Activated B cell treated with CpG ODN at 0.5 μM for 24 hours (primary cell): ENCODE measurements at regions of chr2 and their contacts with region 1.

Region 1: DNA sequence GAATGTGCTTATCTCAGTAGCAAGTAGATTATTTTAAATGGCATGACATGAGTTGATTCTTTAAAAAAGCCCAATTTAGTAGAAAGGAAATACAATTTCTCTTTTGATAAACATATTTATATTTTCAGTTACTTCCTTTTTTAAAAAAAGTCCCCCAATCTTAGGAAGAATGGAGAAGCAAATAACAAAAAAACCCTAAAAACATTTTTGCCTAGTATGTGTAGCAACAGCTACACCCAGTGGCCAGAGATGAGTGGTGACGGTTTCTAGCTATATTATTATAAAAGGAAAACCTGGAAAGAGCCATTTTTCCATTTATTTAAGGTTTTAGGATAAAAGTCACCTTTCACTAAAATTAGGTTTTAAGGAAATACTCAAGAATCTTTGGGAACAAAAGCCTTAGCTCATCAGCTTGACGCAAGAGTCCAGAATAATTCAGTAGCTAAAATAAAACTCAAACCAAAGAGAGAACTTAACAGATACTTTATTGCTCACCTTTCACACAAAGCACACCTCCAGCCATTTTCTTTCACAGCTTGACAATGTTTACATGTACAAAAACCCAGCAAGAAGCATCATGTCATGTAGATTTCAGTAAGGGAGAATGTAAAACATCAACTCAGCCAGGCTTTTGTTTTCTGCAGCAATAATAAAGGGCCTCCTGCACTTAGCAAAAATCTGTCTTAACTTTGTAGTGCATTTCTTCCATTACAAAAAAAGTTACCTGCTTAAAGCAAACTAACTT is 15.7 kb downstream of the FAM98A start:
- DNase-seq: no peak
- ATAC-seq: peak; percentile 71
- H3K4me3 Mint-ChIP-seq: no peak overlapping the region
- H3K27ac Mint-ChIP-seq: peak overlapping the region; percentile 71
- H3K4me1 Mint-ChIP-seq: peaks cover 24% of the 10 kb centered on the region
- H3K27me3 Mint-ChIP-seq: no peaks in the 10 kb centered on the region
- CTCF ChIP-seq: peak; percentile 93

Region 2: DNA sequence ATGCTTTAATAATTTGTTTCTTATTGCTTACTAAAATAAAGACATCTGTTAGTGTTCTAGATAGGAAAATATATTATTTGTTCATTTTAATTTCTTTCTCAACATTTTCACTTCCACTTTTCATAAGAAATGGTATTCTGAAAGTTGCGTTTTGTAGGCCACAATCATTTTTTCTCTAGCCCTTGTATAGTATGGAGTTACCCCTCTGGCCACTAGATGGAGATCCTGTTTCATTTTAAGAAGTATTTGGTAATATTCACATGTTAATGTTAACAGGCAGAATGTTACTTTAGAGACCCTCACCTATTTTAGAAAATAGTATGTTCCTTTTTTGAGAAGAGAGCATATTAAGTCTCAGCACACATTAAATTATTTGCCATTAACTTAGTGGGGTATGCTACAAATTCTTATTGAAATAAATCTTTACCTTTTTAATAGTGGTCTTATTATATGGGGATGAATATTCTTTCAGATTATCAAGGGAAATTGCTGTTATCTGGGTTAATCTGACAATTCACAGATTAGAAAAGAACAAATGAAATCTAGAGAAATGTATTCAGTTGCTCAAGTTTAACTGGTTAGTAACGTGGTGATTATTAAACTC is 1029.4 kb before region 1 on chr2:
- CTCF ChIA-PET with region 1: no interaction called
- POLR2A ChIA-PET with region 1: no interaction called
- intact Hi-C with region 1: loop called (anchors 1 kb)
- DNase-seq: no peak
- ATAC-seq: peak; percentile 85
- H3K4me3 Mint-ChIP-seq: no peak overlapping the region
- H3K27ac Mint-ChIP-seq: peak overlapping the region; percentile 30
- H3K4me1 Mint-ChIP-seq: peaks cover 6% of the 10 kb centered on the region
- H3K27me3 Mint-ChIP-seq: no peaks in the 10 kb centered on the region
- CTCF ChIP-seq: no peak

Region 3: GRCh38 chr2:32946314-32947075 is 636.9 kb before region 1 on chr2 and contains the start of gene LTBP1:
- CTCF ChIA-PET with region 1: no interaction called
- POLR2A ChIA-PET with region 1: no interaction called
- intact Hi-C with region 1: loop called (anchors 1 kb)
- DNase-seq: peak; percentile 41
- ATAC-seq: peak; percentile 78
- H3K4me3 Mint-ChIP-seq: peak within 1 kb of the TSS; percentile 83
- H3K27ac Mint-ChIP-seq: no peak within 1 kb of the TSS
- H3K4me1 Mint-ChIP-seq: peaks cover 15% of the 10 kb centered on the region
- H3K27me3 Mint-ChIP-seq: peaks cover 29% of the 10 kb centered on the region
- CTCF ChIP-seq: no peak
- total RNA-seq, gene LTBP1: 0.07 TPM in 1 of 2 replicates, not detected in the other

Region 4: GRCh38 chr2:33208400-33208799 is 375.0 kb before region 1 on chr2:
- CTCF ChIA-PET with region 1: interaction called, 16 read pairs
- POLR2A ChIA-PET with region 1: no interaction called
- intact Hi-C with region 1: loop called (anchors 1 kb)
- DNase-seq: no peak
- ATAC-seq: no peak
- H3K4me3 Mint-ChIP-seq: no peak overlapping the region
- H3K27ac Mint-ChIP-seq: no peak overlapping the region
- H3K4me1 Mint-ChIP-seq: peaks cover 2% of the 10 kb centered on the region
- H3K27me3 Mint-ChIP-seq: peaks cover 6% of the 10 kb centered on the region
- CTCF ChIP-seq: no peak

Region 5: GRCh38 chr2:33412920-33413319 is 170.4 kb before region 1 on chr2:
- CTCF ChIA-PET with region 1: interaction called, 15 read pairs
- POLR2A ChIA-PET with region 1: no interaction called
- intact Hi-C with region 1: loop called (anchors 1 kb)
- DNase-seq: no peak
- ATAC-seq: no peak
- H3K4me3 Mint-ChIP-seq: no peak overlapping the region
- H3K27ac Mint-ChIP-seq: no peak overlapping the region
- H3K4me1 Mint-ChIP-seq: no peaks in the 10 kb centered on the region
- H3K27me3 Mint-ChIP-seq: no peaks in the 10 kb centered on the region
- CTCF ChIP-seq: no peak

Region 6: DNA sequence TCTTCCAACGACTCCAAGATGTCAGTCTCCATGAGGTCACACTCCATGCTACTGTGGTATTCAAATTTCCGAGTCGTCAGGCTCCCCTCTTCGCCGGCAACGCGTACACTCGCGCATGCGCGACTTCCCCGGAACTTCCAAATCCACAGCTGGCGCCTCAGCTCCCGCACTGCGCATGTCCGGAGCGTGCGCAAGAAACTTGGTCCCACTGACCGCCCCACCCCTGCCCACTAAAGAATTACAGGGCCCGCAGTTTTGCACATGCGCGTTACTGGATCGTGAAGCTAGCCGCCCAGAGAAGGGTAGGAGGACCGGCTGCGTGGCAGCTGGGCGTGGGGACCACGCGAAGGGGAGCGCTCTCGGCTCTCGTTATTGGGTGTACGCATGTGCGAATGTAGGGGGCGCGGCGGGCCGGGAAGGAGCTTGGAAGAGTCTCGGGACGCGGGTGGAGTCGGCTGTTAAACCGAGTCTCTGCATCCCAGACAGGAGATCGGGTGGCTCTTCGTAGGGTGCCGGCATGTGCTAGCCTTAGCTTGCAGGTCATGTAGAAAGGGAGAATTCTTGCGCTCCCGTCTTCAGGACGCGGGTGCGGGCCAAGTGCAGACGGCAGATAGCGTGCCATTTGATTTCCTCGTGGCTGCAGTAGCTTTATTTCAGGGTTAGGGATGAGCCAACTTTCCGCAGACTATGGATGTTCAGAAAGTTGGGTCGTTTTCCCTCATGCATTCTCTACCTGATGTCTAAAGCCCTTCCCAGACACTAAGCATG is 16.0 kb after region 1 on chr2 and contains the start of gene FAM98A:
- CTCF ChIA-PET with region 1: interaction called, 34 read pairs
- POLR2A ChIA-PET with region 1: interaction called, 6 read pairs
- intact Hi-C with region 1: no loop called
- DNase-seq: peak; percentile 97
- ATAC-seq: peak; percentile 94
- H3K4me3 Mint-ChIP-seq: peak within 1 kb of the TSS; percentile 99
- H3K27ac Mint-ChIP-seq: peak within 1 kb of the TSS; percentile 96
- H3K4me1 Mint-ChIP-seq: peaks cover 34% of the 10 kb centered on the region
- H3K27me3 Mint-ChIP-seq: no peaks in the 10 kb centered on the region
- CTCF ChIP-seq: no peak
- total RNA-seq, gene FAM98A: 30.2 and 40.5 TPM in 2 replicates